ENCODE measurements at regions of chr7 and their contacts with region 1.

Region 1: GRCh38 chr7:127047521-127047920 is 205.2 kb downstream of the GRM8 start:
- DNase-seq: no peak
- H3K4me3 ChIP-seq: no peak overlapping the region
- H3K27ac ChIP-seq: no peak overlapping the region
- H3K4me1 ChIP-seq: no peaks in the 10 kb centered on the region
- H3K27me3 ChIP-seq: no peaks in the 10 kb centered on the region
- CTCF ChIP-seq: no peak
- EP300 ChIP-seq: no peak
- RAD21 ChIP-seq: no peak

Region 2: DNA sequence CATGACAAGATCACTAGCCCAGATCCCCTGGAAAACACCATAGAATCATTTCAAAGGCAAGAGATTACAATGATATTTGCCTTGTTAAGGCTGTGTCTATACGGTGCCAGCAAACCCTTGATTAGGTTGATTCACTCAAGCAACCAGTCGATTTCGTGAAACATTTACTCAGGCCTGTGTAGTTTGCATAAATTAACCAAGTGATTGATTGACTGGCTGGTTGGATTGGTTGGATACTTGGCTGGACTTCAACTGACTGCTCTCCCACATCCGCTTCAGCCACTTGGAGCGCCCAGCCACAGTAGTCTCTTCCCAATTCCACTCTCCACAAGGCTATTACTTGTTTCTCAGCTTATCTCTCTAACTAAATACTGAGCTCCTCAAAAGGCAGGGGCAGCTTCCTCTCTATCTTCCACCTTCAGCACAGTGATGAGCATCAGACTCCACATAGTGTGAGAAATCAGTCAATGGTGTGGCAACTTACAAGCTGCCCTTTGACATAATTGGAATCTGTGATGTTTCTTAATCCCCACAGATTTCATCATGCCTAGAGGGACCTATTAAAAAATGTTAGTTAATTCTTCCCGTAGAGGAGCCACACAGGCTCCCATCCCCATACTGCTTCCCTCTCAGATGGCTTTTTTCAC is 12.2 kb before region 1 on chr7:
- CTCF ChIA-PET with region 1: interaction called, 11 read pairs
- POLR2A ChIA-PET with region 1: no interaction called
- DNase-seq: no peak
- H3K4me3 ChIP-seq: no peak overlapping the region
- H3K27ac ChIP-seq: no peak overlapping the region
- H3K4me1 ChIP-seq: no peaks in the 10 kb centered on the region
- H3K27me3 ChIP-seq: no peaks in the 10 kb centered on the region
- CTCF ChIP-seq: no peak
- EP300 ChIP-seq: no peak
- RAD21 ChIP-seq: no peak

Region 3: GRCh38 chr7:127226685-127227374 is 179.3 kb after region 1 on chr7:
- CTCF ChIA-PET with region 1: no interaction called
- POLR2A ChIA-PET with region 1: no interaction called
- DNase-seq: no peak
- H3K4me3 ChIP-seq: no peak overlapping the region
- H3K27ac ChIP-seq: no peak overlapping the region
- H3K4me1 ChIP-seq: no peaks in the 10 kb centered on the region
- H3K27me3 ChIP-seq: no peaks in the 10 kb centered on the region
- CTCF ChIP-seq: no peak
- EP300 ChIP-seq: no peak
- RAD21 ChIP-seq: no peak

Measured in SK-N-SH (cell line).